ENCODE measurements at regions of chr2 and their contacts with region 1.

Region 1: GRCh38 chr2:30447149-30448045 is at the start of gene LCLAT1:
- DNase-seq: peak; percentile 71 to 89 (median 82)
- H3K4me3 ChIP-seq: peak within 1 kb of the TSS; percentile 66 to 99 (median 90)
- H3K27ac ChIP-seq: peak within 1 kb of the TSS in 37 of 59 donors; percentile 1 to 85 (median 53)
- H3K27me3 ChIP-seq: no peaks in the 10 kb centered on the region
- CTCF ChIP-seq: peak in 3 of 56 donors; percentile 4 to 17 (median 10)
- total RNA-seq, gene LCLAT1: 12.2 to 31.1 (median 22.8) TPM

Region 2: DNA sequence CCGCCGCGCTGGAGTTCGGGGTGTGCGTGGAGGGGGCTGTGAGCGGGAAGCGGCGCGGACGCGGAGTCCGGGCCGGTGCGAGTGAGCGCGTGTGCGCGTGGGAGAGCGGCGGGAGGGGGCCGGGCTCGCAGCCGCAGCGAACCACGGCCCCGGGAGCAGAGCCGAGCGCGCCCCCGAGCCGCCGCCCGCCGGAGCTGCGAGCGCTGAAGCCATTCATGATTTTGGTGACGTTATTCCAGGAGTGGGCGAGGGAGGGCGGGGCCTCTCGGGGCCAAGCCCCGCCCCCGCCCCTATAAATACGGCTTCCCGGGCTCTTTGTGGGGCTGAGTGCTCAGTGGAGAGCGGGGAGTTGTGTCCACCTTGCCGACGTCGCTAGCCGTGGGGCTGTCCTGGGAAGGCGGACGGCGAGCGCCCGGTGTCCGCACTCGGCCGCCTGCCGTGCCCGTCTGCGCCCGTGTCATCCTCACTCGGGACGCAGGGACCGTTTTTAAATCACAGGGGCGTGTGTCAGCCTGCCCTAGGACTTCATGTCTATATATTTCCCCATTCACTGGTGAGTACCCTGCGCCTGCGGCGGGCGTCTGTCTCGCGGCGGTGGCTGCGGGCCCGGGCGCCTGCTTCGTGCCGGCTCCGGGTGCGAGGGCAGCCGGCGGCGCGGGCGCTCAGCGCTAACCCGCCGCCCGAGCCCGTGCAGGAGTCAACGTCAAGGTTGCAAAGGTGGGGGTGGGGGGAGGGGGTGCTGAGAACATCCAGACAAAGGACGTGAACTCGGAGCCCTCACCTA is 216.0 kb before region 1 on chr2 and contains the start of gene LBH:
- intact Hi-C with region 1: loop called in 1 of 2 experiments (anchors 10 kb)
- DNase-seq: peak; percentile 53 to 89 (median 80)
- H3K4me3 ChIP-seq: peak within 1 kb of the TSS; percentile 52 to 84 (median 73)
- H3K27ac ChIP-seq: peak within 1 kb of the TSS in 52 of 59 donors; percentile 4 to 90 (median 69)
- H3K27me3 ChIP-seq: peaks cover 0 to 15% (median 0%) of the 10 kb centered on the region in 45 donors
- CTCF ChIP-seq: peak in 2 of 56 donors; percentile 7 to 15
- total RNA-seq, gene LBH: 3.1 to 35.3 (median 8.7) TPM

Region 3: DNA sequence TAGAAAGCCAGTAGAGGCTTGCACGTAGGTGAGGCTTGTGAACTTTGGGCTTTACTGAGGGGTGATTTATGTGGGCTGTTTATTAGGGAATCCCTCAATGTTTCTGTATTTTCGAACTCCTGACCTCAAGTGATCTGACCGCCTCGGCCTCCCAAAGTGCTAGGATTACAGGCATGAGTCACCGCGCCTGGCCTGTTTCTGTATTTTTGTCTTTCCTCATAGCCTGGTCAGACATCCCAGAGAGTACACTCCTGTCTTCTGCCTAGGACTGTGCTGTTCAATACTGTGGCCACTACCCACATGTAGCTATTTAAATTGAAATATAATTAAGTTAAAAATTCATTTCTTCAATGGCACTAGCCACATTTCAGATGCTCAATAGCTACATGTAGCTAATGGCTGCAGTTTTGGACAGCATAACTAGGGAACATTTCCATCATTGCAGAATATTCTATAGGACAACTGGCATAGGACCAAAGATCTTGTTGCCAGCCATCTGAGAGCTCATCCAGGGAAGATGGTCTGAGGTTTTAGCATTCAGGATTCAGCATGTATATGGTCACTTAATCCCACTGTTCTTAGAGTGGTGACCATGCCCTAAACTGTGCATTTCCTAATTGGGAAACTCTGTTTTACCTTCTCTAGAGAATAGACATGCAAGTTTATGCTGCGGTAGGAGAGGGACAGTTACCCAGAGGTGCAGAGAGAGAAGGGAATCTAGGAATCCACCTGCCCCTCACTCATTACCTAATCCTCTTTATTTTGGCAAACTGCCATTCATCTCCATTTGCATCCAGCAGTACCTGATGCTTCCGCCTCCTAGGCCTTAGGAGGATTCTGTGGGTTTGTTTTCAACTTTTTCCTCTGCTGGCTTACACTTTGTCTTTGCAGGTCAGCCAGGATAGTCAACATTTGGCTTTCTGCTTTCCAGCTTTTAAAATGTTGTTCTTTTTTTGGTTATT is 64.0 kb after region 1 on chr2:
- intact Hi-C with region 1: no loop called
- DNase-seq: no peak
- H3K4me3 ChIP-seq: no peak overlapping the region
- H3K27ac ChIP-seq: no peak overlapping the region
- H3K27me3 ChIP-seq: no peaks in the 10 kb centered on the region
- CTCF ChIP-seq: no peak